CD4-positive, alpha-beta memory T cell (primary cell): ENCODE measurements at regions of chr17 and their contacts with region 1.

Region 1: DNA sequence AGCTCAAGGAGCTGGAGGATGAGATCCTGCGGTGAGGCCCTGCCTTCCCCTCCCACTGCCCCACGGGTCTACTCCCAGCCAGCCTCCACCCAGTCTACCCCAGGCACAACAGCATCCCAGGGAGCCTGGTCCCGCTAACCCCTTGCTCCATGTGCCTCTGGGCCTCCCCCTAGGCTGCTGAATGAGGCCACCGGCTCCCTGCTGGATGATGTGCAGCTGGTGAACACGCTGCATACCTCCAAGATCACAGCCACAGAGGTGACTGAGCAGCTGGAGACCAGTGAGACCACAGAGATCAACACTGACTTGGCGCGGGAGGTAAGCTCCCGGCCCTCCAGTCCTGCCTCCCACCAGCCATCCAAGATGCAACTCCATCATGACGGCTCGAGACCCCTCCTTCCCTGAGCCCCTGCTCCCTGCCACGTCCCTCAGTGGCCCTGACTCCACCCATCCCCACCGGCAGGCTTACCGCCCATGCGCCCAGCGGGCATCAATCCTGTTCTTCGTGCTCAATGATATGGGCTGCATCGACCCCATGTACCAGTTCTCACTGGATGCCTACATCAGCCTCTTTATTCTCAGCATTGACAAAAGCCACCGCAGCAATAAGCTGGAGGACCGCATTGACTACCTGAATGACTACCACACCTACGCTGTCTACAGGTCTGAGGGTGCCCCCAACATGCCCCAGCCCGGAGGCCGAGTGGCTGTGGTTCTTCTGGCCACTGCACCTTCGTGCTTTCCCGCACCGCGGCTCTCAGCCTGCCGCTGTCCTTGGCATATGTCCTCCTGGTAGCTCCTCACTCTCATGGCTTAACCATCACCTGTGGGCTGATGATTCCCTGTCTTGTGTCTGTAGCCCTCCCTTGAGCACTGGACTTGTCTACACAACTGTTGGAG is 15.0 kb upstream of the KDM6B start:
- DNase-seq: no peak
- H3K4me3 ChIP-seq: no peak overlapping the region
- H3K4me3 Mint-ChIP-seq: no peak overlapping the region
- H3K27ac ChIP-seq: no peak overlapping the region
- H3K27ac Mint-ChIP-seq: no peak overlapping the region
- H3K4me1 ChIP-seq: no peaks in the 10 kb centered on the region
- H3K4me1 Mint-ChIP-seq: no peaks in the 10 kb centered on the region
- H3K27me3 ChIP-seq: no peaks in the 10 kb centered on the region
- H3K27me3 Mint-ChIP-seq: no peaks in the 10 kb centered on the region

Region 2: GRCh38 chr17:7744416-7744815 is 74.6 kb before region 1 on chr17:
- CTCF ChIA-PET with region 1: interaction called, 4 read pairs
- POLR2A ChIA-PET with region 1: no interaction called
- intact Hi-C with region 1: loop called (anchors 1 kb)
- DNase-seq: no peak
- H3K4me3 ChIP-seq: no peak overlapping the region
- H3K4me3 Mint-ChIP-seq: no peak overlapping the region
- H3K27ac ChIP-seq: no peak overlapping the region
- H3K27ac Mint-ChIP-seq: no peak overlapping the region
- H3K4me1 ChIP-seq: no peaks in the 10 kb centered on the region
- H3K4me1 Mint-ChIP-seq: peaks cover 0 to 4% (median 2%) of the 10 kb centered on the region in 4 donors
- H3K27me3 ChIP-seq: no peaks in the 10 kb centered on the region
- H3K27me3 Mint-ChIP-seq: peaks cover 14 to 18% of the 10 kb centered on the region in 2 donors

Region 3: GRCh38 chr17:7782237-7782636 is 36.8 kb before region 1 on chr17:
- CTCF ChIA-PET with region 1: no interaction called
- POLR2A ChIA-PET with region 1: no interaction called
- intact Hi-C with region 1: no loop called
- DNase-seq: no peak
- H3K4me3 ChIP-seq: no peak overlapping the region
- H3K4me3 Mint-ChIP-seq: peak overlapping the region in 1 of 8 donors; percentile 23
- H3K27ac ChIP-seq: no peak overlapping the region
- H3K27ac Mint-ChIP-seq: no peak overlapping the region
- H3K4me1 ChIP-seq: no peaks in the 10 kb centered on the region
- H3K4me1 Mint-ChIP-seq: peaks cover 0 to 2% (median 0%) of the 10 kb centered on the region in 4 donors
- H3K27me3 ChIP-seq: peaks cover 7% of the 10 kb centered on the region
- H3K27me3 Mint-ChIP-seq: peaks cover 6 to 9% of the 10 kb centered on the region in 2 donors

Region 4: GRCh38 chr17:7851438-7852256 is 32.7 kb after region 1 on chr17:
- CTCF ChIA-PET with region 1: interaction called, 6 read pairs
- POLR2A ChIA-PET with region 1: interaction called, 5 read pairs
- intact Hi-C with region 1: loop called (anchors 1 kb)
- DNase-seq: peak; percentile 93 to 95 (median 95)
- H3K4me3 ChIP-seq: peak overlapping the region in 1 of 2 donors; percentile 30
- H3K4me3 Mint-ChIP-seq: peak overlapping the region; percentile 71 to 87 (median 78)
- H3K27ac ChIP-seq: peak overlapping the region; percentile 61
- H3K27ac Mint-ChIP-seq: peak overlapping the region; percentile 88 to 94 (median 93)
- H3K4me1 ChIP-seq: peaks cover 30% of the 10 kb centered on the region
- H3K4me1 Mint-ChIP-seq: peaks cover 15 to 21% (median 18%) of the 10 kb centered on the region in 4 donors
- H3K27me3 ChIP-seq: no peaks in the 10 kb centered on the region
- H3K27me3 Mint-ChIP-seq: no peaks in the 10 kb centered on the region

Region 5: DNA sequence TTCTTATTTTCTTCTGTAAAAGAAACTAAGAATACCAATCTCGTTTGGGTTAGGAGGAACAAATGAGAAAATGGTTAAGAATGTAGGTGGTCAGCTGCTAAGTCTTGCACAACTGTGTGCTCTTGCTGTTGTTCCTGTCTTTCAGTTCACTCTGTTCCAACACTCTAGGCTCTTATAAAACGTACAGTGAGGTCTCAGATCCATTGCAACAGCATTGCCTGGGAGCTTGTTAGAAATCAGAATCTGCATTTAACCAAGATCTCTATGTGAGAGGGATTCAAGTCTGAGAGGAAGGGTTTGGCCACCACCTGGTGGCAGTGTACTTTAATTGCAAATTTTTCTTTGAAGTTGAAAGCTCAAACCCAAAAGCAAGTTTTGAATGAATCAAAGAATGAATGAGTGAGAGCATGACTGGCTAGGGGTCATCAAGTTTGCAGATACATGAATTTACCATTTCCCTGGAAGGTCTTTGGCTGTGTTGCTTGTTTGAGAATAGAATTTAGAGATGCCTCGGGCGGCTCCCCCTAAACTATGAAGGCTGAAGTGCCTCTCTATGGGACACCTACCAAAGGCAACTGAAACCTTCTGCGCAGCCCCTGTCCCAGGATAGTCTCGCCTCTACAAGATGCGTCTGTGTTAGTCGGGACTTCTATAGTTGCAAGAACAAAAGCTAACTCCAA is 222.4 kb after region 1 on chr17:
- CTCF ChIA-PET with region 1: interaction called, 5 read pairs
- POLR2A ChIA-PET with region 1: no interaction called
- intact Hi-C with region 1: loop called (anchors 1 kb)
- DNase-seq: peak; percentile 29 to 49 (median 35)
- H3K4me3 ChIP-seq: no peak overlapping the region
- H3K4me3 Mint-ChIP-seq: no peak overlapping the region
- H3K27ac ChIP-seq: no peak overlapping the region
- H3K27ac Mint-ChIP-seq: no peak overlapping the region
- H3K4me1 ChIP-seq: no peaks in the 10 kb centered on the region
- H3K4me1 Mint-ChIP-seq: peaks cover 0 to 4% (median 0%) of the 10 kb centered on the region in 4 donors
- H3K27me3 ChIP-seq: no peaks in the 10 kb centered on the region
- H3K27me3 Mint-ChIP-seq: peaks cover 15 to 16% of the 10 kb centered on the region in 2 donors